Aorta (tissue), 5 donors: ENCODE measurements at regions of chr20 and their contacts with region 1.

Region 1: DNA sequence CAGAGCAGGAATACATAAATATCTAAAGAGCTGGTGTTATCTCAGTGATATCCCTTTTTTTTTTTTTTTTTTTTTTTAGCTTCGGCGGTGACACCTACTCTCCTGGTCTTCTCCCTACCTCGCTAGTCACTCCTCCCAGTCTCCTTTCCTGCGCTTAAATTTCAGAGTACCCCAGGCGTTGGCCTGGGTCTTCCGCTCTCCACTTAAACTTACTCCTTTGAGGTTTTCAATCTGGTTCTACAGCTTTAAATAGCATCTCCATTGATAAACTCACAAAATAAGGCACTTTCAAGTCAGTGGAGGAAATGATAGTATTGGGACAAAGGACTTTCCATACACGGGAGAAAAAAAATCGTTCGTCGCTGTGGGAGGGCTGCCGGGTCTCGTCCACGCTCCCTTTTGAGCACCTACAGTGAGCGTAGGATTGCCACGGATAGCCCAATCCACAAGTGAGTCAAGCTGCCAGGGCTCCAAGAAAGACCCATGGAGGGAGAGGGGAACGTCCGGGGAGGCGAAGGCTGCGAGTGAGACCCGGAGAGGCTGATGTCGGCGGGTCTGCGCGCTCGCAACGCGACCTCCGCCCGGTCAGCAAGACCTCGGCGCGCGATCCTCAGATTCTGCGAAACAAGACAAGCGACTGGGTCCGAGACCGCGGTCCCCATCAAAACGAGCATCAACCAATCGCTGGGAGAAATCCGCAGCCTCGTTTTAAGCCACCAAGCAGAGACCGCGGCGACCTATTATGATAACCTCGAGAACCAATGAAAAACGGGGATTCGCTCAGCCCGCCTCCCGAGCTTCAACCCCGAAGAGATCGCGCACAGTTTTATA is 672 bp upstream of the SRSF6 start:
- DNase-seq: peak; percentile 94
- ATAC-seq: peak; percentile 93
- H3K4me3 ChIP-seq: peak overlapping the region; percentile 1 to 48
- H3K27ac ChIP-seq: peak overlapping the region in 1 of 2 donors; percentile 100
- H3K4me1 ChIP-seq: peaks cover 0 to 2% of the 10 kb centered on the region in 2 donors
- H3K27me3 ChIP-seq: no peaks in the 10 kb centered on the region

Region 2: GRCh38 chr20:43210901-43211300 is 246.1 kb before region 1 on chr20:
- intact Hi-C with region 1: loop called in 1 of 2 experiments (anchors 10 kb)
- DNase-seq: no peak
- ATAC-seq: no peak
- H3K4me3 ChIP-seq: no peak overlapping the region
- H3K27ac ChIP-seq: no peak overlapping the region
- H3K4me1 ChIP-seq: no peaks in the 10 kb centered on the region
- H3K27me3 ChIP-seq: no peaks in the 10 kb centered on the region

Region 3: DNA sequence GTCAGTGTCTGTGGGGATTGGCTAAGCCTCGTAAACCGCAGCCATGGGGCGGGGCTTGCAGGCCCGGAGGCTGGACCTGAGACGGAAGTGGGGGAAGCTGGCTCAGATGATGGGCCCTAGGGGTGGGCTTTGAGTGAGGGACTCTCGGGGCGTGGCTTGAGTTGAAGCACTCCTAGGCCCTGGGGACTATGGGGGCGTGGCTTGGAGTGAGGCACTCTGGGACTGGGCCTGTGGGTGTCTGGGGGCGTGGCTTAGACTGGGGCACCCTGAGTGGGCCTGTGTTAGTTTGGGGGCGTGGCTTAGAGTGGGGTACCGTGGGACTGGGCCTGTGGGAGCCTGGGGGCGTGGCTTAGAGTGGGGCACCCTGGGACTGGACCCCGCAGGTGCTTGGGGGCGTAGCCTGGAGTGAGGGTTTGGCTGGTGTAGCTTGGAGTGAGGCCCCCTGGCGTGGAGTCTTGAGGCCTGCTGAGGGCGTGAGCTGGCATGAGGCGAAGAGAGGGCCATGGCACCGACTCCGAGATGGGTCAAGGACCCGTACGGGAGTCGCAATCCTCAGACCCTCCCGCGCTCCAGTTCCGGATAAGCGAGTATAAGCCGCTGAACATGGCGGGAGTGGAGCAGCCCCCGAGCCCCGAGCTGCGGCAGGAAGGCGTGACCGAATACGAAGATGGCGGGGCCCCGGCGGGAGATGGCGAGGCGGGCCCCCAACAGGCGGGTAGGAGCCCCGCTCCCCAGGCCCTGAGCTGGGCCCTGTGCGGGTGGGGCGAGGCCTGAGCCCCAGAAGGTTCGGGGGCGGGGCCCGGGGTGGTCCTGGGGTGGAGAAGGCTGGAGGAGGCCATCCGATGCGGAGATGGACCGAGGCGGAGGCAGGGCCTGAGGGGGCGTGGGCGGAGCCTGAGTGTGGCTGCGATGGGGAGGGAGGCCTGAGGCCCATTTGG is 57.3 kb after region 1 on chr20:
- intact Hi-C with region 1: loop called in 1 of 2 experiments (anchors 5 kb)
- DNase-seq: peak; percentile 97 to 99
- ATAC-seq: peak; percentile 96
- H3K4me3 ChIP-seq: peak overlapping the region in 1 of 2 donors; percentile 16
- H3K27ac ChIP-seq: no peak overlapping the region
- H3K4me1 ChIP-seq: no peaks in the 10 kb centered on the region
- H3K27me3 ChIP-seq: no peaks in the 10 kb centered on the region